IMR-90 (cell line): ENCODE measurements at regions of chr6 and their contacts with region 1.

Region 1: DNA sequence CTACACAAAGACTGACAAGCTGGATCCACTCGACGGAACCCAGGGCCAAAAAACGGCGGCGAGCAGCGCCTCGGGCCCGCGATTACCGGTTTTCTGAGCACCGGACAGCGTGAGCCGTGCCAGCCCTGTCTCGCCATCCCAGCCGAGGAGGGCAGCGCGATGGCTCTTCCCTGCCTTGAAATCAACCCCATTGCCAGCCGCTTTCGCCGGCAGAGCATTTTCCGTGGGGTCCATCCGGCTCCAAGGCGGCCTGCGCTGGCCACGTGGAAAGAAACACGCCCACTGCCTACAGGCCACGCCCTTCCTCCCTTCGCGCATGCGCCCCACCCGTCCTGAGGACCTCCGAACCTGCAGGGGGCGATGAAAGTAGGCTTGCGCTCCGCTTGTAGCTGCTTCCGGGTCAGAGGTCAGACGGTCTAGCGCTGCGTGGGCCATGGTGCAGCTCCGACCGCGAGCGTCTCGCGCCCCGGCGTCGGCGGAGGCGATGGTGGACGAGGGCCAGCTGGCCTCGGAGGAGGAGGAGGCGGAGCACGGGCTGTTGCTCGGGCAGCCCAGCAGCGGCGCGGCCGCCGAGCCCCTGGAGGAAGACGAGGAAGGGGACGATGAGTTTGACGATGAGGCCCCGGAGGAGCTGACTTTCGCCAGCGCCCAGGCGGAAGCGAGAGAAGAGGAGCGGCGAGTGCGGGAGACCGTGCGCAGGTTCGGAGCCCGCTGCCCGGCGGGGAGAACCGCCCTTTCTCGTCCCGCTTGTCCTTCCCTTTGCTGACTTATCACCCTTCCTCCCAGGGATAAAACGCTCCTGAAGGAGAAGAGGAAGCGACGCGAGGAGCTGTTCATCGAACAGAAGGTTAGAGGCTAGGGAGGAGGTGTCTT is at the start of gene NOL7:
- DNase-seq: peak; percentile 99
- ATAC-seq: peak; percentile 93
- H3K4me3 ChIP-seq: peak within 1 kb of the TSS; percentile 64
- H3K27ac ChIP-seq: peak within 1 kb of the TSS; percentile 75
- H3K4me1 ChIP-seq: peaks cover 5% of the 10 kb centered on the region; the same call in 1 of the 2 replicates
- H3K27me3 ChIP-seq: no peaks in the 10 kb centered on the region
- CTCF ChIP-seq: peak; percentile 98
- POLR2A ChIP-seq: peak; percentile 83
- RAD21 ChIP-seq: 0 out of 2 replicates have a peak, but pooled peaks have one; percentile 0
- total RNA-seq, gene NOL7: 21.3 and 60.8 TPM in 2 replicates

Region 2: GRCh38 chr6:13355043-13355951 is 259.9 kb before region 1 on chr6:
- CTCF ChIA-PET with region 1: interaction called, 3 read pairs
- POLR2A ChIA-PET with region 1: no interaction called
- dilution Hi-C with region 1: no loop called
- in situ Hi-C with region 1: no loop called
- intact Hi-C with region 1: loop called (anchors 2 kb)
- DNase-seq: peak; percentile 99
- ATAC-seq: peak; percentile 87
- H3K4me3 ChIP-seq: no peak overlapping the region
- H3K27ac ChIP-seq: peak overlapping the region; percentile 94
- H3K4me1 ChIP-seq: peaks cover 23% of the 10 kb centered on the region
- H3K27me3 ChIP-seq: no peaks in the 10 kb centered on the region
- CTCF ChIP-seq: no peak
- POLR2A ChIP-seq: no peak
- RAD21 ChIP-seq: no peak

Region 3: DNA sequence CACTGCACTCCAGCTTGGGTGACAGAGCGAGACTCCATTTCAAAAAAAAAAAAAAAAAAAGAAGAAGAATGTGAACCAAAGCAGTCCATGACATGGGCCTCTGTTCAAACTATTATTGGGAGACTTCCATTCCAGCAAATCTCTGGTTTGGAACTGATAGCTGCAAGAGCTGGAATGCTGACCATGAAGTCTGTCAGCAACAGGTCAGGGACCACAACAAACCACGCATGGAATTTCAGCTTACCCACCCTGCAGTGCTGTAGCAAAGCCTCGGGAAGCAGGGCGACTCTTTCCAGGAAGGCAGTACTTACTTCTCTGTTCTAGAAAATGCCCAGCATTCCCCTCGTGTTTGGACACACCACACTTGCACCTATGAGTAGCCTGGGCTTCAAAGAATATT is 252.7 kb before region 1 on chr6:
- CTCF ChIA-PET with region 1: no interaction called
- POLR2A ChIA-PET with region 1: no interaction called
- dilution Hi-C with region 1: no loop called
- in situ Hi-C with region 1: no loop called
- intact Hi-C with region 1: loop called (anchors 1 kb)
- DNase-seq: peak; percentile 92
- ATAC-seq: peak; percentile 95
- H3K4me3 ChIP-seq: no peak overlapping the region
- H3K27ac ChIP-seq: peak overlapping the region; percentile 38; the same call in 1 of the 2 replicates
- H3K4me1 ChIP-seq: peaks cover 7% of the 10 kb centered on the region
- H3K27me3 ChIP-seq: no peaks in the 10 kb centered on the region
- CTCF ChIP-seq: no peak
- POLR2A ChIP-seq: no peak
- RAD21 ChIP-seq: no peak

Region 4: DNA sequence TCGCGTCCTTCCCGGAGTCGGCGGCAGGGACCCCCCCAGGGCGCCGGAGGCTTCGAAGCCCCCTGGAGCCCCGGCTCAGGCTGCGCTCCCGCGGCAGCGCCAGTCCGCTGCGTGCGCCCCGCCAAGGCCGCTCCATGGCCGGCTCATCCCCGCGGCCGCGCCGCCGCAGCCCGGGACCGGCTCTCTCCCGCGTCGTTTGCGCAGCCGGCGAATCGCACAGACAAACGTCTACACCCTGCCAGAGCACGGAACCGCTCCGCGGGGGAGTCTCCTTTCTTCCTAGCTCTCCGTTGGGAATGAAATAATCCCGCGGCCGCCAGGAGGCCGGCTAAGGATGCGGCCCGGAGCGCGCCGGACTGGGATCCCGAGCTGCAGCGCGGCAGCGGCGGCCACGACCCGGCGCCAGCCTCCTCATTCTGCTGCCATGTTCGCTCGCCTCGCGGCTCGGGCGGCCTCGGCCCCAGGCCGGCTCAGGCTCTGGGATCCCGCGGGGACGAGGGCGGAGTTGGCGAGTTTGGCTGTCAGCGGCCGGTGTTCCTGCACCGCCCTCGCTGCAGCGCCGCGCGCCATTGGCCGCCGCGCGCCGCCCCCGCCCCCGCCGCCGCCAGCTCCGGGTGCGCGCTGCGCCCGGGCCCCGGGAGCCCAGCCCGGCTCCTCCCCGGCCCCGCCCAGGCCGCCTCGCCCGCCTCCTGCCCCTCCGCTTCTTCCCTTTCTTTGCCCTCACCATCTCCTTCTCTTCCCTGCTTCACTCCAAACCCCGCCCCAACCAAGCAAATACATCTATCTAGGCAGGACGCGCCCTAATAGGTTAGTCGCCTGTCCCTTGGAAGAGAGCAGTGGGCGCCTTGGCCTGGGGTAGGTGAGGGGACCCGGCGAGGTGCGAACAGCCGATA is 127.8 kb before region 1 on chr6 and contains the start of gene GFOD1:
- CTCF ChIA-PET with region 1: no interaction called
- POLR2A ChIA-PET with region 1: no interaction called
- dilution Hi-C with region 1: no loop called
- in situ Hi-C with region 1: no loop called
- intact Hi-C with region 1: loop called (anchors 2 kb)
- DNase-seq: peak; percentile 78
- ATAC-seq: peak; percentile 94
- H3K4me3 ChIP-seq: peak within 1 kb of the TSS; percentile 70
- H3K27ac ChIP-seq: peak within 1 kb of the TSS; percentile 63
- H3K4me1 ChIP-seq: peaks cover 5% of the 10 kb centered on the region; the same call in 1 of the 2 replicates
- H3K27me3 ChIP-seq: no peaks in the 10 kb centered on the region
- CTCF ChIP-seq: peak; percentile 24; the same call in 1 of the 2 replicates
- POLR2A ChIP-seq: peak; percentile 53; the same call in 1 of the 2 replicates
- RAD21 ChIP-seq: no peak; the same call in 1 of the 2 replicates
- total RNA-seq, gene GFOD1: 3.4 and 3.6 TPM in 2 replicates

Region 5: GRCh38 chr6:13574149-13574570 is 41.0 kb before region 1 on chr6:
- CTCF ChIA-PET with region 1: interaction called, 3 read pairs
- POLR2A ChIA-PET with region 1: no interaction called
- dilution Hi-C with region 1: no loop called
- in situ Hi-C with region 1: no loop called
- intact Hi-C with region 1: loop called (anchors 2 kb)
- DNase-seq: peak; percentile 90
- ATAC-seq: peak; percentile 91
- H3K4me3 ChIP-seq: peak overlapping the region; percentile 76
- H3K27ac ChIP-seq: peak overlapping the region; percentile 69; the same call in 1 of the 2 replicates
- H3K4me1 ChIP-seq: no peaks in the 10 kb centered on the region; the same call in 1 of the 2 replicates
- H3K27me3 ChIP-seq: peaks cover 6% of the 10 kb centered on the region; the same call in 1 of the 2 replicates
- CTCF ChIP-seq: peak; percentile 49
- POLR2A ChIP-seq: peak; percentile 81
- RAD21 ChIP-seq: peak; percentile 41; the same call in 1 of the 2 replicates

Region 6: DNA sequence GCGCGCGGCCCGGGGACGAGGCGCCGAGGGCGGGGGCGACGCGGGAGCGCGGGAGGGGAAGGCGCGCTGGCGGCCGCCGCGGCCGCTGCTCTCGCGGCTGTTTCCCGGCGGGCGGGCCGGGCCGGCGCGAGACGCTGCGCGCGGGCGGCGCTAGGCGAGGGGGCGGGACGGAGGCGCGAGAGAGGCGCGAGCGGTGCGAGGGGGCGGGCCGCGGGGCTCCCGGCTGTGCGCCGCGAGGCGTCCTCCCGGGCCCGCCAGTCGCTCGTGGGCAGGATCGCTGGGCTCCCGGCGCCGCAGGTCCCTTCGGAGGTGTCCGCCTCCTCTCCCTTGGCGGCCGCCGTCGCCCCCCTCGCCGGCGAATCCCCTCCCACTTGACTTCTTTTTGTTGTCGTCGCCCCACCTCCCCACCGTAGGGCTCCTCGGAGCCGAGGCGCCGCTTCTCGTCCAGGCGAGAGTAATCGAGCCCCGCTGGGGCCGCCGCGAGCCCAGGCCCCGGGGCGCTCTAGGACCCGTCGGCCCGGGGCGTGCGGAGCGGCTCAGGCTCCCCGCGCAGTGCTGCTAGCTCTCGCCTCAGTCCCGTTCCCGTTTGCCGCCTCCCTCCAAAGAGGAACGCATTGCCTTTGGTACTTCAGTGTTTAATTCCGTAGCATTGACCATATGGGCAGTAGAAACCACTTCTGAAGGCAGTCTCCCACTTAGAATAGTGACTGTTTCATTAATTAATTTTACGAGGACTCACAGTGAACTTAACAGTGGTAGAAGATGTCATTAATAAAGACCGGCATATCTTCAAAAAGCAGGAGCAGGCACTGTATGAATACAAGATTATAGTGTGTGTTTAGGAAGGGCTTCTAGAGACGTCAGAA is 96.8 kb after region 1 on chr6 and contains the start of gene RANBP9:
- CTCF ChIA-PET with region 1: interaction called, 8 read pairs
- POLR2A ChIA-PET with region 1: no interaction called
- dilution Hi-C with region 1: no loop called
- in situ Hi-C with region 1: no loop called
- intact Hi-C with region 1: loop called (anchors 1 kb)
- DNase-seq: peak; percentile 86
- ATAC-seq: peak; percentile 91
- H3K4me3 ChIP-seq: peak within 1 kb of the TSS; percentile 94
- H3K27ac ChIP-seq: peak within 1 kb of the TSS; percentile 94
- H3K4me1 ChIP-seq: peaks cover 3% of the 10 kb centered on the region
- H3K27me3 ChIP-seq: no peaks in the 10 kb centered on the region
- CTCF ChIP-seq: no peak
- POLR2A ChIP-seq: peak; percentile 74
- RAD21 ChIP-seq: no peak; the same call in 1 of the 2 replicates
- total RNA-seq, gene RANBP9: 17.7 and 23.3 TPM in 2 replicates

Region 7: GRCh38 chr6:13762611-13763441 is 147.7 kb after region 1 on chr6:
- CTCF ChIA-PET with region 1: no interaction called
- POLR2A ChIA-PET with region 1: no interaction called
- dilution Hi-C with region 1: no loop called
- in situ Hi-C with region 1: no loop called
- intact Hi-C with region 1: loop called (anchors 2 kb)
- DNase-seq: peak; percentile 90
- ATAC-seq: peak; percentile 81
- H3K4me3 ChIP-seq: no peak overlapping the region
- H3K27ac ChIP-seq: peak overlapping the region; percentile 47; the same call in 1 of the 2 replicates
- H3K4me1 ChIP-seq: peaks cover 4% of the 10 kb centered on the region
- H3K27me3 ChIP-seq: no peaks in the 10 kb centered on the region
- CTCF ChIP-seq: no peak
- POLR2A ChIP-seq: no peak
- RAD21 ChIP-seq: no peak

Region 8: DNA sequence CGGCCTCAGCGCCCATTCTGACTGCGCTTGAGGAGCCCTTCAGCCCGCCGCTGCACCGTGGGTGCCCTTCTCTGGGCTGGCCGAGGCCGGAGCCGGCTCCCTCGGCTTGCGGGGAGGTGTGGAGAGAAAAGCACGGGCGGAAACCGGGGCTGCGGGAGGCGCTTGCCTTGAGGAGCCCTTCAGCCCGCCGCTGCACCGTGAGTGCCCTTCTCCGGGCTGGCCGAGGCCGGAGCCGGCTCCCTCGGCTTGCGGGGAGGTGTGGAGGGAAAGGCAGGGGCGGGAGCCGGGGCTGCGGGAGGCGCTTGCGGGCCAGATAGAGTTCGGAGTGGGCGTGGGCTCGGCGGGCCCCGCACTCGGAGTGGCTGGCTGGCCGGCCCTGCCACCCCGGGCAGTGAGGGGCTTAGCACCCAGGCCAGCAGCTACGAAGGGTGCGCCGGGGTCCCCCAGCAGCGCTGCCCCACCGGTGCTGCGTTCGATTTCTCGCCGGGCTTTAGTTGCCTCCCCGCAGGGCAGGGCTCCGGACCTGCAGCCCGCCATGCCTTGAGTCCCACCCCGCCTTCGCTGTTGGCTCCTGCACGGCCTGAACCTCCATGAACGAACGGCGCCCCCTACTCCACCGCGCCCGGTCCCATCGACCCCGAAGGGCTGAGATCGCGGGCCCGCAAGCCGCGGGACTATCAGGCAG is 244.9 kb after region 1 on chr6:
- CTCF ChIA-PET with region 1: no interaction called
- POLR2A ChIA-PET with region 1: no interaction called
- dilution Hi-C with region 1: no loop called
- in situ Hi-C with region 1: no loop called
- intact Hi-C with region 1: no loop called
- DNase-seq: no peak
- ATAC-seq: peak; percentile 40
- H3K4me3 ChIP-seq: peak overlapping the region; percentile 28
- H3K27ac ChIP-seq: no peak overlapping the region
- H3K4me1 ChIP-seq: no peaks in the 10 kb centered on the region; the same call in 1 of the 2 replicates
- H3K27me3 ChIP-seq: peaks cover 23% of the 10 kb centered on the region
- CTCF ChIP-seq: no peak
- POLR2A ChIP-seq: no peak
- RAD21 ChIP-seq: no peak